ENCODE measurements at regions of chr1 and their contacts with region 1.

Region 1: DNA sequence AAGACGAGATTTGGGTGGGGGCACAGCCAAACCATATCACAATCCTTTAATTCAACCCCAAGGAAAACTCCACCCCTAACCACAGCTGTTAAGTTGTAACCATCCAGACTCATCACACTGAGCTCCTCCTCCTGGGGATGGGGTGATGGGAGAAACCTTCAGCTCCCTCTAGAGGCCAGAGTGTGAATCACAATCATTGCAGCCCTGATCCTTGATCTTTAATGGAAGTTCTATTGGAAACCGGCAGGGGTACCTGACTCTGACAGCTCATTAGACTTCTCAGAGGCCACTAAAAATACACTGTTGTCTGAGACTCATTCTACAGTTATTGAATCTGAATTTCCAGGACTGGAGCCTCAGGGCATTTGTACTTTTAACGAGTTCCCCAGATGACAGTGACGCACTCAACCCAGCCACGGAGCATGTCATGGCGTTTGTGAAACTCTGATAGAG is 127.2 kb downstream of the IGSF21 start:
- H3K4me3 ChIP-seq: no peak overlapping the region
- H3K27ac ChIP-seq: no peak overlapping the region
- H3K4me1 ChIP-seq: no peaks in the 10 kb centered on the region
- CTCF ChIP-seq: no peak

Region 2: DNA sequence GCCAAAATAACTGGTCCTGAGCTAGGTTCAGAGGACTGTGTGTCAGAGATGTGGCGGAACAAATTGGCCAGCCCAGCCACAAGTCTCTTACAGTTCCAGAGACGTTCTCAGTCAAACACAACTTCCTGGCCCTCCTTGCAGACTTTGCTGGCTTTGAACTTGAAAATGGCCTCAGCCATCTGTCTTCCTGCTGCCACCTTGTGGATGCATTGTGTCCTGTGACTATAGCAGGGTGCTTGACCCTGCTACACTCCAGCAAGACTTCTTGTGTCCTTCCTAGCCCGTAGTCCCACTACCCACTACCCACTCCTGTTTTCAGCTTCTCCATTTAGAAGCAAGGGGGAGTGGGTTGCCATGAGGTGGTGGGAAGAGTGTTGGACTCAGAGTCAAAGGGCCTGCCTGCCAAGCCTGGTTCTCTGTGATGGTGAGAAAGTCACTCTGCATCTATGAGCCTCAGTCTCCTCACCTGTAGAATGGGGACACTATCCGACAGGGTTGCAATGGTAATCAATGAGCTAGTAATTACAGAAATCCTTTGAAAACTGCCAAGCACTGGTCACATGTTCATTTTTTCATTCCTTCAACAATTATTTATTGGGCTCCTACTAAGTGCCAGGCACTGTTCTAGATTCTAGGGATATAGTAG is 17.3 kb before region 1 on chr1:
- CTCF ChIA-PET with region 1: interaction called, 11 read pairs
- POLR2A ChIA-PET with region 1: no interaction called
- H3K4me3 ChIP-seq: no peak overlapping the region
- H3K27ac ChIP-seq: no peak overlapping the region
- H3K4me1 ChIP-seq: no peaks in the 10 kb centered on the region
- CTCF ChIP-seq: no peak

Region 3: DNA sequence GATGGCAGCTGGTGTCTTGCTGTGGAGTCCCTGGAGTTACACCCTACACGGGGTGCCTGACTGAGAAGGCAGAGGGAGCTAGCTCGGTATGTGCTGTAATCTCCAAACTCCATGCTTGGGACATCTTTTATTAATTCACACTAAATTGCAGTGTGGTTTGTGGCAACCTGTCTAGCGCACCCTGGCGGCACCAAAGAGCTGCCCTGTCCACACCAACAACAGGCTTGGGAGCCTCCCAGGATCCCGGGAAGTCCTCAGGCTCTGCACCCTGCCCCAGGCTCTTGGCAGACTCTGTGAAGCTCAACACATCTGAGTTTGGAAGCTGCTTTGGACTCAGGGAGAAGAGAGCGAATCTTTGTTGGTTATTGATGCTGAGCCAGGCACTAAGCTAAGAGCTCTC is 11.7 kb after region 1 on chr1:
- CTCF ChIA-PET with region 1: interaction called, 20 read pairs
- POLR2A ChIA-PET with region 1: no interaction called
- H3K4me3 ChIP-seq: no peak overlapping the region
- H3K27ac ChIP-seq: no peak overlapping the region
- H3K4me1 ChIP-seq: no peaks in the 10 kb centered on the region
- CTCF ChIP-seq: no peak

Measured in HEK293 (cell line).